HCT116 (cell line): ENCODE measurements at regions of chr16 and their contacts with region 1.

Region 1: DNA sequence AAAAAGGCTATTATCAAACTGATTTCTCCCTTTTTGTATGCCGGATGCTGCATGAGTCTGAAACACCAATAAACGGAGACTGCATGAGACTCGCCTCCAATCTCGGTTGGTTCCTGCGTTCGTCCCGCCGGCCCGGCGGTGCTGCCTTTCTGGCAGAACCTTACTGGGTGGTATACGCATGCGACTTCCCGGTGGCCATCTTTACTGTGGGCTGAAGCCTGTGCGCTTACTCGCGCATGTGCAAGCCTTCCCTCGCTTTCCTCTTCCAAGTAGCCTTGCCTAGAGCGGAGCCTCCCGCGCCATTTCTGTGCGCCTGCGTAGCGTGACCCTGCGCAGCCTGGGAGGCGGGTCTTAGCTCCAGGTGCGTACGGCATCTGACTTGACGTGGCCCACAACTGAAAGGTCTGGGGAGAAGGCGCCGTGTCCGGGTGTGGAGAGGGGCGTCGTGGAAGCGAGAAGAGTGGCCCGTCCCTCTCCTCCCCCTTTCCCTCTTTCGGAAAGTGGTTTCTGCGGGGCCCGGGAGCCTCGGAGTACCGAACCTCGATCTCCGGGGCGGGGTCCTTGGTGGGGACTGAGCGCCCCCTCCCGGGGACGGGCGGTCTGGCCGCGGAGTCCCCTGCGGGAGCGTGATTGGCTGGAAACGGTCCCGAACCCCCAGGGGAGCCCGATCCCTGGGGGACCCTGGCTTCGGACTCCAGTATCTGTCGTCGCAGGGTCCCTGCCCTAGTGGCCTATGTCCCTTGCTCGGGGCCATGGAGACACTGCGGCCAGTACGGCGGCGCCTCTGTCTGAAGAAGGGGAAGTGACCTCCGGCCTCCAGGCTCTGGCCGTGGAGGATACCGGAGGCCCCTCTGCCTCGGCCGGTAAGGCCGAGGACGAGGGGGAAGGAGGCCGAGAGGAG is at the start of gene PAGR1:
- DNase-seq: peak; percentile 99
- ATAC-seq: peak; percentile 69
- H3K4me3 ChIP-seq: peak within 1 kb of the TSS; percentile 87 to 98
- H3K27ac ChIP-seq: peak within 1 kb of the TSS; percentile 98
- H3K4me1 ChIP-seq: peaks cover 32 to 78% of the 10 kb centered on the region in 2 experiments
- H3K27me3 ChIP-seq: no peaks in the 10 kb centered on the region
- CTCF ChIP-seq: peak in 2 of 3 experiments; percentile 83 to 90; a peak in 4 of 6 replicates
- POLR2A ChIP-seq: peak; percentile 85
- RAD21 ChIP-seq: no peak
- total RNA-seq, gene PAGR1: 28.9 TPM

Region 2: GRCh38 chr16:29805378-29806098 is 10.5 kb before region 1 on chr16:
- CTCF ChIA-PET with region 1: interaction called, 33 read pairs
- POLR2A ChIA-PET with region 1: interaction called, 20 read pairs
- RAD21 ChIA-PET with region 1: interaction called, 7 to 9 read pairs
- intact Hi-C with region 1: no loop called
- DNase-seq: peak; percentile 93
- ATAC-seq: peak; percentile 56
- H3K4me3 ChIP-seq: peak overlapping the region; percentile 67 to 70
- H3K27ac ChIP-seq: peak overlapping the region; percentile 85
- H3K4me1 ChIP-seq: peaks cover 27 to 55% of the 10 kb centered on the region in 2 experiments
- H3K27me3 ChIP-seq: no peaks in the 10 kb centered on the region
- CTCF ChIP-seq: no peak
- POLR2A ChIP-seq: peak; percentile 75
- RAD21 ChIP-seq: no peak

Region 3: DNA sequence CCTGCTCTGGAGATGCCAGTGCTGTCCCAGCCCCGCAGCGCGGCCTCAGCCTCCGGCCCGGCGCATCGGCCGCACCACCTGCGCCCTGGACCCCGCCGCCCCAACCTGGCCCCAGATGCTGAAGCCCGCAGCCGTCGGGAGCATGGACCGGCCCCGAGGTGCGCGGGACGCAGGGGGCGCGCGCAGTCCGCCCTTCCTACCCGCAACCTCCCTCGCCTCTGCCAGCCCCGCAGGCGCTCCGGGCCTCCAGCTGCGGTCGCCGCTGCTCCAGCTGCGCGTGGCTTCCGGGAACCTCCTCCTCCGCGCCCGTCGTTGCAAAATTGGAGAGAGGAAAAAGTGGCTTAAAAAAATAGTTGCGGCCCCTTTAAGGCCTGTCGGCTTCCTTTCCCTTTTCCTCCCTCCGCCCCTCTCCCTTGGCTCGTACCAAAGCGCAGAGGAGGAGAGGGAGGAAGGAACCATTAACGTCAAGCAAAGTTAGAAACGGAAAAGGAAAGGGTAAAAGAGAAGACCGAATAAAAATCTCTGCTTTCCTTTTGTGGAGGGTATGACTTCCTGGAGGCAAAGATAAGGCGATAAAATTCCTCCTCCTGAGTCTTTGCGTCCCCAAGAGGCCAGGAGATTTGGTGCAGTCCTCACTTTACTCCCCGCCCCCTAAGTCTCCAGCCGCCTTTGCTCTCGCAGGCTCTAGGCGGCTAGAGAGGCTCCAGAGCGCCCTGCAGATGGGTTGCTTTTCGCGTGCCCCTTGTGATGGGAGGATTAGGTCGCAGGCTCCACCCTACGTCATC is 47.0 kb after region 1 on chr16 and contains the start of gene CDIPT:
- CTCF ChIA-PET with region 1: interaction called, 4 read pairs
- POLR2A ChIA-PET with region 1: interaction called, 4 read pairs
- RAD21 ChIA-PET with region 1: no interaction called
- intact Hi-C with region 1: loop called (anchors 5 kb)
- DNase-seq: peak; percentile 98
- ATAC-seq: peak; percentile 99
- H3K4me3 ChIP-seq: peak within 1 kb of the TSS; percentile 85 to 89
- H3K27ac ChIP-seq: peak within 1 kb of the TSS; percentile 80
- H3K4me1 ChIP-seq: peaks cover 0 to 15% of the 10 kb centered on the region in 2 experiments; a peak in 3 of 4 replicates
- H3K27me3 ChIP-seq: no peaks in the 10 kb centered on the region
- CTCF ChIP-seq: peak; percentile 58 to 77 (median 70); a peak in 5 of 6 replicates
- POLR2A ChIP-seq: peak; percentile 52
- RAD21 ChIP-seq: peak; percentile 49
- total RNA-seq, gene CDIPT: 58.3 TPM

Region 4: DNA sequence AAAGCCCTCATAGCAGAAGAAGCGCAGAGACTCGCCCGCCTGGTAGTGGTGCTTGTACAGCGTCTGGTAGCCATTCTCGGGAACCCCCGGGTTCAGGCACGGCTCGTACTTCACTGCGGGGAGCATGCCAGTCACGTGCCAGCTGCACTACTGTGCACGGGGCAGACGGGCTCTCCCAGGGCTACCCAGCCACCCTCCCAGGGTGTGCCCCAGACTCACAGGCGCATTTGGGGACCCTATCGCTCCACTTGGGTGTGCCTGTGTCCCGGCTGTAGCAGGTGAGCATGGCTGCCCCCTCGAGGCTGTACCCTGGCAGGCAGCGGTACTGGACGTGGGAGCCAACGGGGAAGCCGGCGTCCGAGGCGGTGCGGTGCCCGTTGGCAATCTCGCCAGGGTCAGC is 57.3 kb after region 1 on chr16:
- CTCF ChIA-PET with region 1: no interaction called
- POLR2A ChIA-PET with region 1: no interaction called
- RAD21 ChIA-PET with region 1: no interaction called
- intact Hi-C with region 1: no loop called
- DNase-seq: no peak
- ATAC-seq: no peak
- H3K4me3 ChIP-seq: no peak overlapping the region
- H3K27ac ChIP-seq: no peak overlapping the region
- H3K4me1 ChIP-seq: peaks cover 0 to 15% of the 10 kb centered on the region in 2 experiments; a peak in 2 of 4 replicates
- H3K27me3 ChIP-seq: no peaks in the 10 kb centered on the region
- CTCF ChIP-seq: no peak
- POLR2A ChIP-seq: no peak
- RAD21 ChIP-seq: no peak

Region 5: DNA sequence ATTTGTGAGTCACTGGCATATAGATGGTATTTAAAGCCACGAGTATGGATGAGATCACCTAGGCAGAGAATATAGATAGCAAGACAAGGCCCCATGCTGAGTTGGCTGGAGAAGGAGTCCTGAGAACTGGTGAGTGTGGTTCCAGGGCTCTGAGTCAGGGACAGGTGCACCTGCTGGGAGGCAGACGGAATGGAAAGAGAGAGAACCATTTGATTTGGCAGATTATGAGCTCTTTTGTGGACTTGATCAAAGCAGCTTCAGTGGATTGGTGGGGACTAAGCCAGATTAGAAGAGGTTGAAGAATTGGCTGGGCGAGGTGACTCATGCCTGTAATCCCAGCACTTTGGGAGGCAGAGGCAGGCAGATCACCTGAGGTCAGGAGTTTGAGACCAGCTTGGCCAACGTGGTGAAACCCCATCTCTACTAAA is 202.7 kb after region 1 on chr16:
- CTCF ChIA-PET with region 1: interaction called, 4 read pairs
- POLR2A ChIA-PET with region 1: interaction called, 7 read pairs
- RAD21 ChIA-PET with region 1: no interaction called
- intact Hi-C with region 1: loop called (anchors 2 kb)
- DNase-seq: no peak
- ATAC-seq: no peak
- H3K4me3 ChIP-seq: no peak overlapping the region
- H3K27ac ChIP-seq: no peak overlapping the region
- H3K4me1 ChIP-seq: peaks cover 0 to 18% of the 10 kb centered on the region in 2 experiments; a peak in 3 of 4 replicates
- H3K27me3 ChIP-seq: no peaks in the 10 kb centered on the region
- CTCF ChIP-seq: no peak
- POLR2A ChIP-seq: no peak
- RAD21 ChIP-seq: no peak